K562 (cell line): ENCODE measurements at regions of chr14 and their contacts with region 1.

Region 1: GRCh38 chr14:35404449-35405303 is at the start of gene NFKBIA:
- DNase-seq: peak; percentile 69 to 88 (median 74)
- ATAC-seq: peak; percentile 90
- H3K4me3 ChIP-seq: peak within 1 kb of the TSS; percentile 89
- H3K27ac ChIP-seq: peak within 1 kb of the TSS; percentile 96
- H3K4me1 ChIP-seq: peaks cover 23 to 28% of the 10 kb centered on the region in 2 experiments
- H3K27me3 ChIP-seq: no peaks in the 10 kb centered on the region
- CTCF ChIP-seq: peak; percentile 44 to 96 (median 71); a peak in 5 of 6 replicates
- EP300 ChIP-seq: no peak
- POLR2A ChIP-seq: peak; percentile 75
- RAD21 ChIP-seq: peak; percentile 49 to 53; a peak in 3 of 4 replicates
- polyA plus RNA-seq, gene NFKBIA: 6.9 to 8.8 TPM

Region 2: GRCh38 chr14:34331728-34332623 is 1072.7 kb before region 1 on chr14:
- CTCF ChIA-PET with region 1: no interaction called
- POLR2A ChIA-PET with region 1: no interaction called
- in situ Hi-C with region 1: loop called (anchors 25 kb)
- intact Hi-C with region 1: no loop called
- DNase-seq: peak; percentile 41 to 73 (median 44)
- ATAC-seq: peak; percentile 97
- H3K4me3 ChIP-seq: no peak overlapping the region
- H3K27ac ChIP-seq: 0 out of 3 replicates have a peak overlapping the region, but pooled peaks have one; percentile 32
- H3K4me1 ChIP-seq: no peaks in the 10 kb centered on the region; a peak in 1 of 5 replicates
- H3K27me3 ChIP-seq: no peaks in the 10 kb centered on the region
- CTCF ChIP-seq: peak; percentile 77
- EP300 ChIP-seq: no peak
- POLR2A ChIP-seq: no peak
- RAD21 ChIP-seq: peak; percentile 47 to 78

Region 3: DNA sequence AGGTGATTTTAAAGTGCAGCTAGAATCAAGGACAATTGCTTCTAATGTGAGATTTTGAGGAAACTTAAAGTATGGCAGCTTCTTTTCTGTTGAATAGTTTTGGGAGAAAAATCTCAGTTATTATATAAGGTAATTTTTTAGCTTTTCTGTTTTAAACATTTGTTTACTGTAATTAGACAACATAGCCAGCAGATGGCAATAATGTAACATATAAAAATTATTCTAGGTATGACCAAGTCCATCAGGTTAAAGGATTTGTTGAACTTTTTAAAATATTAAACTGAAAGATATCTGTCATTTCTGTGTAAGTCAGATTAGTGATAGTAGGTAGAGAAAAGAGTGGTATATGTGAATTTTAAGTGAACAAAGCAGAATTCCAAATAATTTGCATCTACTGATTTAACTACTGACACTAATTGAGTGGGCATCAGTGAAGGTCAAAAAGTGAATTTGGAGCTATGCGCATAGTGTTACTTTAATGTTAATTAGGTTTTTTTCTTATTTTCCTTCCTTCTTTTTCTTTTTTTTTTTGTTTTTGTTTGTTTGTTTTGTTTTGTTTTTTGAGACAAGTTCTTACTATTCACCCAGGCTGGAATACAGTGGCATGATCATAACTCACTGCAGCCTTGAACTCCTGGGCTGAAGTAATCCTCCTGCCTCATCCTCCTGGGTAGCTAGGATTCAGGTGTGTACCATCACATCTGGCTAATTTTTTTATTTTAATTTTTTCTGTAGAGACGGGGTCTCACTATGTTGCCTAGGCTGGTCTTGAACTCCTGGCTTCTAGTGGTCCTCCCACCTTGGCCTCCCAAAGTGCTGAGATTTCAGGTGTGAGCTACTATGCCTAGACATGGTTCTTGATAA is 263.7 kb before region 1 on chr14:
- CTCF ChIA-PET with region 1: interaction called, 4 read pairs
- POLR2A ChIA-PET with region 1: interaction called, 5 read pairs
- in situ Hi-C with region 1: no loop called
- intact Hi-C with region 1: loop called (anchors 1 kb)
- DNase-seq: peak in 1 of 4 experiments; percentile 10
- ATAC-seq: no peak
- H3K4me3 ChIP-seq: no peak overlapping the region
- H3K27ac ChIP-seq: no peak overlapping the region
- H3K4me1 ChIP-seq: no peaks in the 10 kb centered on the region
- H3K27me3 ChIP-seq: no peaks in the 10 kb centered on the region
- CTCF ChIP-seq: peak in 2 of 3 experiments; percentile 15 to 47; a peak in 3 of 6 replicates
- EP300 ChIP-seq: no peak
- POLR2A ChIP-seq: no peak
- RAD21 ChIP-seq: peak; percentile 62 to 63

Region 4: GRCh38 chr14:35240231-35240630 is 164.4 kb before region 1 on chr14:
- CTCF ChIA-PET with region 1: no interaction called
- POLR2A ChIA-PET with region 1: no interaction called
- in situ Hi-C with region 1: loop called (anchors 5 kb)
- intact Hi-C with region 1: no loop called
- DNase-seq: no peak
- ATAC-seq: no peak
- H3K4me3 ChIP-seq: no peak overlapping the region
- H3K27ac ChIP-seq: no peak overlapping the region
- H3K4me1 ChIP-seq: no peaks in the 10 kb centered on the region
- H3K27me3 ChIP-seq: no peaks in the 10 kb centered on the region
- CTCF ChIP-seq: no peak
- EP300 ChIP-seq: no peak
- POLR2A ChIP-seq: no peak
- RAD21 ChIP-seq: no peak

Region 5: GRCh38 chr14:35365130-35366055 is 39.3 kb before region 1 on chr14:
- CTCF ChIA-PET with region 1: no interaction called
- POLR2A ChIA-PET with region 1: interaction called, 7 read pairs
- in situ Hi-C with region 1: no loop called
- intact Hi-C with region 1: loop called (anchors 5 kb)
- DNase-seq: peak in 3 of 4 experiments; percentile 36 to 82 (median 71)
- ATAC-seq: peak; percentile 56
- H3K4me3 ChIP-seq: no peak overlapping the region
- H3K27ac ChIP-seq: peak overlapping the region; percentile 99
- H3K4me1 ChIP-seq: peaks cover 43 to 54% of the 10 kb centered on the region in 2 experiments
- H3K27me3 ChIP-seq: no peaks in the 10 kb centered on the region; a peak in 1 of 5 replicates
- CTCF ChIP-seq: no peak
- EP300 ChIP-seq: peak; percentile 58; the same call in 1 of the 2 replicates
- POLR2A ChIP-seq: no peak
- RAD21 ChIP-seq: no peak

Region 6: GRCh38 chr14:35687335-35687939 is 282.8 kb after region 1 on chr14:
- CTCF ChIA-PET with region 1: no interaction called
- POLR2A ChIA-PET with region 1: no interaction called
- in situ Hi-C with region 1: loop called (anchors 5 kb)
- intact Hi-C with region 1: no loop called
- DNase-seq: peak; percentile 11 to 55 (median 21)
- ATAC-seq: peak; percentile 84
- H3K4me3 ChIP-seq: no peak overlapping the region
- H3K27ac ChIP-seq: no peak overlapping the region
- H3K4me1 ChIP-seq: no peaks in the 10 kb centered on the region
- H3K27me3 ChIP-seq: no peaks in the 10 kb centered on the region
- CTCF ChIP-seq: peak; percentile 59 to 87 (median 72)
- EP300 ChIP-seq: no peak
- POLR2A ChIP-seq: no peak
- RAD21 ChIP-seq: peak; percentile 83 to 84